CD4-positive, alpha-beta T cell (primary cell): ENCODE measurements at regions of chr21 and their contacts with region 1.

Region 1: GRCh38 chr21:29164325-29164942 is 34.0 kb downstream of the MAP3K7CL start:
- DNase-seq: peak in 2 of 14 experiments; percentile 32 to 36
- ATAC-seq: no peak
- H3K4me3 ChIP-seq: no peak overlapping the region
- H3K4me3 Mint-ChIP-seq: no peak overlapping the region
- H3K27ac ChIP-seq: no peak overlapping the region
- H3K27ac Mint-ChIP-seq: no peak overlapping the region
- H3K4me1 ChIP-seq: no peaks in the 10 kb centered on the region
- H3K4me1 Mint-ChIP-seq: no peaks in the 10 kb centered on the region
- H3K27me3 ChIP-seq: no peaks in the 10 kb centered on the region
- H3K27me3 Mint-ChIP-seq: no peaks in the 10 kb centered on the region
- CTCF ChIP-seq: no peak

Region 2: DNA sequence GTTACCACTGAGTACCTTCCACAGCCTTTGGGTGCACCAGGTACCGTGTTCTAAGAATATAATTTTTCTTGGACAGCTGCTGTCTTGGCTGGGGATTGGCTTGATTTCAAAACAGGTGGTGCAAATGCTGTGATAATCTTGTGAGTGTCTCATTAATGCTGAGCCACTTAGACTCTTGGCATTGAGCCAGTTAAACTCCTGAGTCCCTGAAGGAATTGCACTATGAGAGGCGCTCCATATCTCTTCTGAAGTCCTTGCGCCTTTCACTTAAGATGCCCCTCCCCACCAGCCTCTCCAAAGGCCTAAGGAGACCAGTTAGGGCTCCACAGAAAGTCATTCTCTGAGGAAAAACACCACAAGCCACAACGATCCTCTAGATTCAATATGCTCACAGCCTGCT is 185.3 kb after region 1 on chr21:
- CTCF ChIA-PET with region 1: interaction called, 4 read pairs
- POLR2A ChIA-PET with region 1: no interaction called
- intact Hi-C with region 1: loop called in 1 of 2 experiments (anchors 2 kb)
- DNase-seq: no peak
- ATAC-seq: no peak
- H3K4me3 ChIP-seq: no peak overlapping the region
- H3K4me3 Mint-ChIP-seq: no peak overlapping the region
- H3K27ac ChIP-seq: no peak overlapping the region
- H3K27ac Mint-ChIP-seq: no peak overlapping the region
- H3K4me1 ChIP-seq: peaks cover 9% of the 10 kb centered on the region
- H3K4me1 Mint-ChIP-seq: peaks cover 21% of the 10 kb centered on the region
- H3K27me3 ChIP-seq: no peaks in the 10 kb centered on the region
- H3K27me3 Mint-ChIP-seq: no peaks in the 10 kb centered on the region
- CTCF ChIP-seq: no peak